OCI-LY7 (cell line): ENCODE measurements at regions of chr17 and their contacts with region 1.

Region 1: DNA sequence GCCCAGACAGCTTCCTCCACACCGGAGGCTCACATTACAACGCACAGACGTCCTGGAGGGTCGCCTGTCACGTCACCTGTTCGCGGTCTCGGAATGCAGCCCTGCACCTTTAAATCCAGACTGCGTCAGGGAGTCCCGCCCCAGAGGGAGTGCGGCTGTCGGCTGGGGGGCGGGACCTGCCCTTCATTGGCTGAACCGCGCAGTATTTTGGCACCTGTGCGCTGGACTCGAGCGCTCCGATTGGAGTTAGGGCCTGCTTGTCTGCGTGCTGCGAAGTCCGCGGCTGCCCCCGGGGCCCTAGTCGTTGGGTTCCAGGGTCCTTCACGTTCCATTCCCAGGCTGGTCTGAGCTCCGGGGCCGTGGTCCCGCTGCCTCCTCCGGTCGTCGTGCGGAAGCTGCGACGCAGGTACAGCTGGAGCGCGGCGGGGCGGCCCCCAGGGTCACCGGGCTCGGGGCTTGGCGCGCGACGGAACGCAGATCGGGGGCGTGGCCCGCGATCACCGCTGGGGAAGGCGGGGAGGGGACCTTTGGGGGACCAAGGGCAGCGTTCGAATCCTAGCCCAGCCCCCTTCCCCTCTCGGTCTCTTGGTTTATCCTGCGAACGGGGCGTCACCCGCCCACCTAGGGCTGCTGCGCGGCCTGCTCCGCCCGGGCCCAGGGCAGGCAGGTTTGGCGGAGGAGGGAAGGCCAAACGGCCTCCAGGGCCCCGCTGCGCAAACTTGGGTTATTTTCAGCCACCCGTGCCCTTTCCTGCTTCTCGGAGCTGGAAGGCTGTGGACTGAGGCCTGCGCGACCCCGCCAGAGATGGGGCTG is at the start of gene MIEF2:
- DNase-seq: peak; percentile 96
- H3K4me3 ChIP-seq: peak within 1 kb of the TSS; percentile 80
- H3K27ac ChIP-seq: peak within 1 kb of the TSS; percentile 49
- H3K4me1 ChIP-seq: peaks cover 33% of the 10 kb centered on the region
- CTCF ChIP-seq: no peak
- total RNA-seq, gene MIEF2: 7.6 and 7.9 TPM in 2 replicates

Region 2: DNA sequence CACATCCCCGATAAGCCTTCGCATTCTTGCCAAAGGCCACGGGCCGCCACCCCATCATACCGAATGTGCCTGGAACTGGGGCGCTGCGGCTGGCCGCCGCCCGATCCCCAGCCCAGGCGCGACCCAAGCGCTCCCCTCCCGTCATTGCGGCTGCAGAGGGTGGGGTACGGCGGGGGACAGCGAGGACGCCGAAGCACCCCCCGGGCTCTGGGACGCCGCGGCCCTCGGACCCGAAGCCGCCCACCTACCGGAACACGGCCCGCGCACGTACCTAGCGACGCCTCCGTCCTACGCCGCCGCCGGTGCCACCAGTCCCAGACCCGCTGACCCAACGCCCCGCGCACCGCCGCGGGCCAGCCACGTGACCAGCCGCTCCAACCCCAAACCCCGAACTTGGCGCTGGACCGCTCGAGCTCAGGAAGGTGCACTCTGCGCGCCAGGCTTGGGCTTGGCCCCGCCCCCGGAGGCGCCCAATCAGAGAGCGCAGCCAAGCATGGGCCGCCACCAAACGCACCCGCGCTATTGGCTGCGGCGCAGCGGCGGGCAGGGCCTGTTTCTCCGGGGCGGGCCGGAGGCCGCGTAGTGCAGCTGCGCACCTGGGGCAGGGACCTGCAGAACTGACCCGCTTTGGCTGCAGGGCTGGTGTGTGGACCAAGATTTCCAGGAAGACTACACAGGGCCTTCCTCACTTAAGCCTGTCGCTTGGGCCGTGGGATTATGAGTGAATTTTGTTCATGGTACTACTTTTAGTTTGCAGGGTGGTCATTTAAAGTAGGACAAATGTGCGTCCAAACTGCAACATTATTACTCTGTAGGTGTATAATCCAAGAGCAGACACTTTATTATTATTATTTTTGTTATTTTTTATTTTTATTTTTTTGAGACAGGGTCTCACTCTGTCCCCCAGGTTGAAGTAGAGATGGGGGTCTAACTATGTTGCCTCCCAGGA is 102.8 kb after region 1 on chr17 and contains the start of gene SHMT1:
- CTCF ChIA-PET with region 1: no interaction called
- POLR2A ChIA-PET with region 1: no interaction called
- intact Hi-C with region 1: loop called (anchors 5 kb)
- DNase-seq: peak; percentile 95
- H3K4me3 ChIP-seq: peak within 1 kb of the TSS; percentile 85
- H3K27ac ChIP-seq: peak within 1 kb of the TSS; percentile 46
- H3K4me1 ChIP-seq: peaks cover 17% of the 10 kb centered on the region
- CTCF ChIP-seq: no peak
- total RNA-seq, gene SHMT1: 62.7 and 66.5 TPM in 2 replicates